Endothelial cell of umbilical vein (primary cell): ENCODE measurements at regions of chr15 and their contacts with region 1.

Region 1: GRCh38 chr15:39358441-39359041 is 222.3 kb upstream of the THBS1 start:
- DNase-seq: peak; percentile 97
- H3K4me3 ChIP-seq: no peak overlapping the region
- H3K27ac ChIP-seq: peak overlapping the region; percentile 100
- H3K4me1 ChIP-seq: peaks cover 63% of the 10 kb centered on the region
- H3K27me3 ChIP-seq: no peaks in the 10 kb centered on the region
- CTCF ChIP-seq: no peak
- POLR2A ChIP-seq: peak; percentile 56

Region 2: DNA sequence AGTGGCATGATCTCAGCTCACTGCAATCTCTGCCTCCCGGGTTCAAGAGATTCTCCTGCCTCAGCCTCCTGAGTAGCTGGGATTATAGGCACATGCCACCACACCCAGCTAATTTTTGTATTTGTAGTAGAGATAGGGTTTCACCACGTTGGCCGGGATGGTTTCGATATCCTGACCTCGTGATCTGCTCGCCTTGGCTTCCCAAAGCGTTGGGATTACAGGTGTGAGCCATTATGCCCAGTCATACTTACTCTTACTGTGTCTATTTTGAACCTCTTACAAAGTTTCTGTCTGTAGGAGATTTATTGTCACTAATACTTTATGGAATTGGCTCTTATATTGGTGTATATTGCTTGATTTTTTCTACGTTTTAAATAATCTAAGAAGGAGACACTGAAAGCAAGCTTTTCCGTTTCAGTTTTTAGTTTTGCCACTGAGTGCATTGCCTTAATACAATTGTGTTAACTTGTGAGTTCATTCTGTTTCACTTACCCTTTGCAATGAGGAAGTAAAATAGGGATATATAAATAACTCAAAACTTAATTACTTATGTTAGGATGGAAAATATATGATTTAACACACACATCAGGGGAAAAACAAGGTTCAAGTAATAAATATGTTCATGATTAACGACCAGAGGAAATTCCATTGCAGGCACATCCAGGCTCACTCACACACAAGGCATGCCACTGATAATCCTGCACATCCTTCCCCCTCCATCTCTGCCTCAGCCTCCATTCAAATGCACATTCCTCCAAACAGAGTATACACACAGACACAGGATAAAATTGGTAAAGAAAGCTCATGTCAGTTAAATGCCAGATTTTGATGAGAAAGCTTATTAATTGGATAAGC is 514.6 kb before region 1 on chr15:
- CTCF ChIA-PET with region 1: no interaction called
- POLR2A ChIA-PET with region 1: no interaction called
- dilution Hi-C with region 1: no loop called
- intact Hi-C with region 1: loop called (anchors 2 kb)
- DNase-seq: peak; percentile 95
- H3K4me3 ChIP-seq: peak overlapping the region in 1 of 3 experiments; percentile 15
- H3K27ac ChIP-seq: peak overlapping the region; percentile 98
- H3K4me1 ChIP-seq: peaks cover 41% of the 10 kb centered on the region
- H3K27me3 ChIP-seq: no peaks in the 10 kb centered on the region
- CTCF ChIP-seq: no peak
- POLR2A ChIP-seq: peak; percentile 61

Region 3: DNA sequence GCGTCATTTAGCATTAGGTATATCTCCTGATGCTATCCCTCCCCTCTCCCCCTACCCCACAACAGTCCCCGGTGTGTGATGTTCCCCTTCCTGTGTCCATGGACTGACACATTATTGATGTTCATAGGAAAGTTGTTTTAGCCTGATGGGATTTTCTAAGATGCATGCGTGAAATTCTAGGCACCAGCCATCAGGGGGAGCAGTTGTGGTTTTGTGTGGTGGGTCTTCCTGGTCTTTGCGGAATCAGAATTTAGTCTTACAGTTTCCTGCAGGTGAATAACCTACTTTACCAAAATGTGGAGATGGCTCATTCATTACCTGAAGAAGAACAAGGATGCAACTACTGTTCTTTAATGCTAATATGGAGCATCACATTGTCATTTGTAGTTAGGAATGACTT is 232.6 kb before region 1 on chr15:
- CTCF ChIA-PET with region 1: interaction called, 4 read pairs
- POLR2A ChIA-PET with region 1: no interaction called
- dilution Hi-C with region 1: no loop called
- intact Hi-C with region 1: loop called (anchors 1 kb)
- DNase-seq: peak; percentile 75
- H3K4me3 ChIP-seq: no peak overlapping the region
- H3K27ac ChIP-seq: peak overlapping the region; percentile 90
- H3K4me1 ChIP-seq: peaks cover 63% of the 10 kb centered on the region
- H3K27me3 ChIP-seq: no peaks in the 10 kb centered on the region
- CTCF ChIP-seq: peak; percentile 68 to 74
- POLR2A ChIP-seq: no peak

Region 4: GRCh38 chr15:39195988-39196486 is 162.5 kb before region 1 on chr15:
- CTCF ChIA-PET with region 1: no interaction called
- POLR2A ChIA-PET with region 1: no interaction called
- dilution Hi-C with region 1: loop called (anchors 25 kb)
- intact Hi-C with region 1: no loop called
- DNase-seq: peak; percentile 37
- H3K4me3 ChIP-seq: no peak overlapping the region
- H3K27ac ChIP-seq: peak overlapping the region; percentile 46
- H3K4me1 ChIP-seq: peaks cover 34% of the 10 kb centered on the region
- H3K27me3 ChIP-seq: no peaks in the 10 kb centered on the region
- CTCF ChIP-seq: no peak
- POLR2A ChIP-seq: no peak

Region 5: DNA sequence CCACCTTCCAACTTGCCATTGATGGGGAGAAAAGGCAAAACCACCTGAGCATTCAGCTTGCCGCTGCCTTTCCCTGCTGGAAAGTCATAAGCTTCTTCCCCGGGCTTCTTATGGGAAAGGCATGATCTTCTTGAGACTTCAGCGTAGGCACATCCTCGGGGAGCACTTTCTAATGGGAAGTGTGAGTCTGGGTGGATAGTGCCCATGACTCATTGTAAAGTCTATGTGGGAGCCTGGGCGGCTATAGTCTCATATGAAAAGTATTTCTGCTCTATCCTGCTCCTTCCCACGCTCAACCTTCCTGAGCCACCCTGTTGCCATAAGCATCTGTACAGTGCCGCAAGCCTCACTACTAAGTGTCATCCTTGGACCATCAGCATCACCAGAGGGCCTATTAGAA is 87.6 kb before region 1 on chr15:
- CTCF ChIA-PET with region 1: interaction called, 3 read pairs
- POLR2A ChIA-PET with region 1: interaction called, 7 read pairs
- dilution Hi-C with region 1: no loop called
- intact Hi-C with region 1: loop called (anchors 1 kb)
- DNase-seq: peak; percentile 90
- H3K4me3 ChIP-seq: no peak overlapping the region
- H3K27ac ChIP-seq: peak overlapping the region; percentile 89
- H3K4me1 ChIP-seq: peaks cover 53% of the 10 kb centered on the region
- H3K27me3 ChIP-seq: no peaks in the 10 kb centered on the region
- CTCF ChIP-seq: no peak
- POLR2A ChIP-seq: no peak

Region 6: GRCh38 chr15:39391230-39391629 is 32.7 kb after region 1 on chr15:
- CTCF ChIA-PET with region 1: no interaction called
- POLR2A ChIA-PET with region 1: no interaction called
- dilution Hi-C with region 1: no loop called
- intact Hi-C with region 1: no loop called
- DNase-seq: no peak
- H3K4me3 ChIP-seq: no peak overlapping the region
- H3K27ac ChIP-seq: no peak overlapping the region
- H3K4me1 ChIP-seq: peaks cover 18% of the 10 kb centered on the region
- H3K27me3 ChIP-seq: no peaks in the 10 kb centered on the region
- CTCF ChIP-seq: no peak
- POLR2A ChIP-seq: no peak

Region 7: GRCh38 chr15:39616731-39617455 is 258.4 kb after region 1 on chr15:
- CTCF ChIA-PET with region 1: no interaction called
- POLR2A ChIA-PET with region 1: no interaction called
- dilution Hi-C with region 1: no loop called
- intact Hi-C with region 1: no loop called
- DNase-seq: peak; percentile 60
- H3K4me3 ChIP-seq: no peak overlapping the region
- H3K27ac ChIP-seq: no peak overlapping the region
- H3K4me1 ChIP-seq: peaks cover 14% of the 10 kb centered on the region
- H3K27me3 ChIP-seq: no peaks in the 10 kb centered on the region
- CTCF ChIP-seq: no peak
- POLR2A ChIP-seq: no peak